ENCODE measurements at regions of chr5 and their contacts with region 1.

Region 1: GRCh38 chr5:158174918-158175851 is 316.2 kb upstream of the CLINT1 start:
- DNase-seq: no peak
- H3K4me3 ChIP-seq: no peak overlapping the region
- H3K27ac ChIP-seq: peak overlapping the region; percentile 28 to 55 (median 40)
- H3K4me1 ChIP-seq: peaks cover 12 to 15% (median 14%) of the 10 kb centered on the region in 4 donors
- H3K27me3 ChIP-seq: peaks cover 0 to 5% (median 0%) of the 10 kb centered on the region in 4 donors
- CTCF ChIP-seq: peak; percentile 65 to 77 (median 72)
- EP300 ChIP-seq: no peak
- POLR2A ChIP-seq: no peak

Region 2: DNA sequence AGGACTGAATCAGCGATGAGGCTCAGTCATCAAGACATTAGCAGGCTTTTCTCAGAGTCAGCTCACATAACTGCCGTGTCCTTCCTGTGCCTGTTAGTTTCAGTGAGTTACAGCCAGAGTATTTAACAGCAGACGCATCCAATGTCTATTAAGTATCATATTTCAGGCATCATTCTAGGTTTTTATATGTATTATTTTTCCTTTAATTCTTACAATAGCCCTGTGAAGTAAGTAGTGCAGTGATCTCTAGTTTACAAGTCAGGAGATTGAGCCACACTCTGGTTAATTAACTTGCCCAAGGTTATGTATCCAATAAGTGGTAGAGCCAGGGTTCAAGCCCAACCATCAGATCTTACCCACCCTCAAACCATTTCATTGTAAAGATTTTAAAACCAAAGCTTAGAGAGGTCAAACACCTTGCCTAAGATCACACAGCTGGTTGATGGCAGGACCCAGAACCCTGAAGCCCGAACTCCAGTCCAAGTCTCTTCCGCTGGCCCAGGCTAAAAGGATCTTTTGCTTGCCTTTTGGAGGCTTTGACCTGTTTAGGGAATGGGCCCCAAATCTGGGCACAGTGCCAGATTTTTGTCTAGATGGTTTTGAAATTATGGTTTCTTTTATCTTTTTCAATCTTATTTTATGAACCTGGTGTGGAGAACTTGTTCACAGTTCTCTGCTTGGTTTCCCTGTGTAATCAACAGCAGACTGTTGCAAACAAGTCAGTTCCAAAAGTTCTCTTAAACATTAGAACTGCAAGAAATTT is 55.0 kb before region 1 on chr5:
- intact Hi-C with region 1: no loop called
- DNase-seq: no peak
- H3K4me3 ChIP-seq: no peak overlapping the region
- H3K27ac ChIP-seq: peak overlapping the region in 1 of 4 donors; percentile 30
- H3K4me1 ChIP-seq: peaks cover 0 to 5% (median 2%) of the 10 kb centered on the region in 4 donors
- H3K27me3 ChIP-seq: no peaks in the 10 kb centered on the region
- CTCF ChIP-seq: no peak
- EP300 ChIP-seq: no peak
- POLR2A ChIP-seq: no peak

Region 3: DNA sequence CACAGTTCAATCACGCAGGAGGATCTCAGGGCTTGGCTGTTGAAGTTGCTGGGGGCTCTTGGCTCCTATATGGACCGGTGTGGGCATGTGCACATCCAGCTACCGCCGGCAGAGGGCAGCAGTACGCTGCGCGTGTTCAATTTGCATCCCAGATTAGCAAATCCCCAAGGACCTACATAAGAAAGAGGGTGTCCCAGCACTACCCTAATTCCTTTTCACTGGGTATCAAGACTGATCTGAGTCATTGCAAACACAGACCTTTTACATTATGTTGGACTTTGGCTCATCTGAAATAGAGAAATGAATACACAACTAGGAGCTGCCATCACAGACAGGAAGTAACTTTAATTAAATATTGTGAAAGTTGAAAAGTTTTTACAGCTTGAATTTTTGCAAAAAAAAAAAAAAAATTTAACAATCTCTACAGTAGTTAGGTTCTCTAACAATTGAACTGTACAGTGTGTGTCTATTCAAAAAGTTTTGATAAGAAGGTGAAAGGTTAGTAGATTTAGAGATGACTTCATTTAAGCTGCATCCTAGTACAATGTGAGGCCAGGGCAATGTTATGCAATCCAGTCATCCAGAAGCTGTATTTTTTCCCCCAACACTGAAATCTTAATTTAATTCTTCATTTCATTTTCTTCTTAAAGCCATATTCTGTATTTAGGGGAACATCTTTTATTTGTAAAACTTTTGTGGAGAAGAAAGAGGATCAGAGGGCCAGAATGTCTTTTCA is 520.6 kb after region 1 on chr5:
- intact Hi-C with region 1: loop called (anchors 2 kb)
- DNase-seq: peak; percentile 94
- H3K4me3 ChIP-seq: no peak overlapping the region
- H3K27ac ChIP-seq: peak overlapping the region in 2 of 4 donors; percentile 15 to 21
- H3K4me1 ChIP-seq: peaks cover 0 to 30% (median 7%) of the 10 kb centered on the region in 4 donors
- H3K27me3 ChIP-seq: peaks cover 0 to 10% (median 0%) of the 10 kb centered on the region in 4 donors
- CTCF ChIP-seq: peak; percentile 91 to 99 (median 98)
- EP300 ChIP-seq: no peak
- POLR2A ChIP-seq: no peak

Measured in esophagus muscularis mucosa (tissue), 4 donors.